ENCODE measurements at regions of chr19 and their contacts with region 1.

Region 1: GRCh38 chr19:18097217-18097992 is at the start of gene MAST3:
- DNase-seq: peak; percentile 93
- ATAC-seq: peak; percentile 76
- H3K4me3 ChIP-seq: peak within 1 kb of the TSS; percentile 71 to 95 (median 91)
- H3K4me3 Mint-ChIP-seq: peak within 1 kb of the TSS; percentile 97
- H3K27ac ChIP-seq: peak within 1 kb of the TSS; percentile 82 to 96
- H3K27ac Mint-ChIP-seq: peak within 1 kb of the TSS; percentile 92
- H3K4me1 ChIP-seq: peaks cover 10 to 42% of the 10 kb centered on the region in 2 donors
- H3K4me1 Mint-ChIP-seq: peaks cover 38% of the 10 kb centered on the region
- H3K27me3 ChIP-seq: no peaks in the 10 kb centered on the region
- H3K27me3 Mint-ChIP-seq: no peaks in the 10 kb centered on the region
- CTCF ChIP-seq: no peak
- total RNA-seq, gene MAST3: 85.5 and 90.7 TPM in 2 replicates

Region 2: DNA sequence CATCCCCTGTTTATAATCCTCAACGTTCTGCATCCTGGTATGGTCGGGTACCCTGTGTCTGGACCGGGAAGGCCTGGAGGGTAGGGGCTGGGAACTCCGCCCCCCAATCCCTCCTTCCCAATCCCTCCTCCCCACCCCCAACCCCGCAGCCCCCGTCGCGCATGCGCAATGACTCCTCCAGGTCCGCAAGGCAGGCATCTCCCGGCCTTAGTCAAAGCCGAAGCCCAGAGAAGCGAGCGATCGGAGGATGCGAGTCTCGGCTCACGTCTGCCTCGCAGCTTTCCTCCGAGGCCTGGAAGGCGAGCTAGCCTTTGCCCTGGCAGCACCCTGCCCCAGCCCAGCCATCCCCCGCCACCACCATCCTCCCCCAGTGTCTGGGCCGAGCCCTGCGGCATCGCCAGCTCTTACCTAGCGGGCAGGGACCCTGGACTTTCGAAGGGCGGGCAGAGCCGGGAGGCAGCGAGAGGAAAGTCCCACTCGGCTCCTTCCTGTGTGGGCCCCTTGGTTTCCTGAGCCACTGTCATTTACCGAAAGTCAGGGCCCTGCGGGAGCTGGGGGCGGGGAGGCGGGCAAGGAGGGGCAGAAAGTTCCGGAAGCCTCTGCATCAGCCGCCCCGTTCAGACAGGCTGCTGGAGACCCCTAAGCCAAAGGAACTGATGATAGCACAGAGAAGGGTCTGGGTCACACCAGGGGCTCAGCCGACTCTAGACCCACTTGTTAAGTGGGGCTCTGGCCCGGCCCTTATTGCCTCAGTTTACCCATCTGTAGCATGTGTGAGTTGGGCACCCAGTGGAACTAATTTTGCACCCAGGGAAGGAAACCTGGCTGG is 249.7 kb before region 1 on chr19 and contains the start of gene JAK3:
- CTCF ChIA-PET with region 1: no interaction called
- POLR2A ChIA-PET with region 1: interaction called, 11 read pairs
- intact Hi-C with region 1: no loop called
- DNase-seq: peak; percentile 88
- ATAC-seq: peak; percentile 81
- H3K4me3 ChIP-seq: peak within 1 kb of the TSS; percentile 57 to 85 (median 67)
- H3K4me3 Mint-ChIP-seq: peak within 1 kb of the TSS; percentile 96
- H3K27ac ChIP-seq: peak within 1 kb of the TSS; percentile 87 to 94
- H3K27ac Mint-ChIP-seq: peak within 1 kb of the TSS; percentile 91
- H3K4me1 ChIP-seq: peaks cover 58 to 90% of the 10 kb centered on the region in 2 donors
- H3K4me1 Mint-ChIP-seq: peaks cover 61% of the 10 kb centered on the region
- H3K27me3 ChIP-seq: no peaks in the 10 kb centered on the region
- H3K27me3 Mint-ChIP-seq: no peaks in the 10 kb centered on the region
- CTCF ChIP-seq: no peak
- total RNA-seq, gene JAK3: 142 and 143 TPM in 2 replicates

Region 3: DNA sequence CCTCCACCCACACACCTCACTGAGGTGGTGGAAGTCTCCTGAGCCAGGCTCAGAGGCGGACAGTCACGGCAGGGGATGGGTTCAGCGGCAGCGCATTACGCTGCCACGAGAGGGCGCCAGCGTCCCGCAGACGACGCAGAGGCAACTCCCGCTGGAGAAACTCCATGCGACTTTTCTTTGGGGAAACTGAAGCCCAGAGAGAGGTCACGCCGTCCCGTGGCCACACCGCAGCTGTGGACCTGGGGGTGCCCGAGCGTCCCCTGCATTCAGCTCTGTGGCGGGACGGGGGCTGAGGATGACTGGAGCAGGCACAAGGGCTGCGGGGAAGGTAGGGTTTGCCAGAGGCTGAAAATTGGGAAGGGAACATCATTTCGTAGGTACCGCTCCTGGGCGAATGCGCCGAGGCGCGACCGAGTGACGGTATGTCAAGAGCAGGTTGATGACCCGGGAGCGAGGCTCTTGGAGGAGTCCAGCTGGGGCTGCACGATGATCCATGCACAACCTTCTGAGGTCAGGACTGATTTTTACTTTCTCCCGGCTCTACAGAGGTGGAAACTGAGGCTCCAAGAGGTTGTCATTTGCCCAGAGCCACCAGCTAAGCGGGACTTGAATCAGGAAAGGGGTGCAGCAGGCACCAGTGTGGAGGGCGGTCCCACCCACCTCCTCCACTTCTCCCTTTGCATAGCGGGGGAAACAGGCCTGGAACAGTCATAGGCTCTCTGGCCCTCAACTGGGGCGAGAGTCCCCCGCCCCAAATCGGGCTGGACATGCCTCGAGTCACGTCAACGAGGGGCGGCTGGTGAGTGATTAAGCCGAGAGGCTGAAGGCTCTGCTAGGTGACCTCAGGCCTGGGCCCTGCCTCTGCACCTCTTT is 90.1 kb before region 1 on chr19:
- CTCF ChIA-PET with region 1: interaction called, 10 read pairs
- POLR2A ChIA-PET with region 1: interaction called, 9 read pairs
- intact Hi-C with region 1: loop called (anchors 1 kb)
- DNase-seq: peak; percentile 91
- ATAC-seq: peak; percentile 59
- H3K4me3 ChIP-seq: peak overlapping the region; percentile 31 to 68 (median 56)
- H3K4me3 Mint-ChIP-seq: peak overlapping the region; percentile 98
- H3K27ac ChIP-seq: peak overlapping the region; percentile 90 to 93
- H3K27ac Mint-ChIP-seq: peak overlapping the region; percentile 94
- H3K4me1 ChIP-seq: peaks cover 30 to 41% of the 10 kb centered on the region in 2 donors
- H3K4me1 Mint-ChIP-seq: peaks cover 42% of the 10 kb centered on the region
- H3K27me3 ChIP-seq: no peaks in the 10 kb centered on the region
- H3K27me3 Mint-ChIP-seq: no peaks in the 10 kb centered on the region
- CTCF ChIP-seq: peak; percentile 100

Region 4: DNA sequence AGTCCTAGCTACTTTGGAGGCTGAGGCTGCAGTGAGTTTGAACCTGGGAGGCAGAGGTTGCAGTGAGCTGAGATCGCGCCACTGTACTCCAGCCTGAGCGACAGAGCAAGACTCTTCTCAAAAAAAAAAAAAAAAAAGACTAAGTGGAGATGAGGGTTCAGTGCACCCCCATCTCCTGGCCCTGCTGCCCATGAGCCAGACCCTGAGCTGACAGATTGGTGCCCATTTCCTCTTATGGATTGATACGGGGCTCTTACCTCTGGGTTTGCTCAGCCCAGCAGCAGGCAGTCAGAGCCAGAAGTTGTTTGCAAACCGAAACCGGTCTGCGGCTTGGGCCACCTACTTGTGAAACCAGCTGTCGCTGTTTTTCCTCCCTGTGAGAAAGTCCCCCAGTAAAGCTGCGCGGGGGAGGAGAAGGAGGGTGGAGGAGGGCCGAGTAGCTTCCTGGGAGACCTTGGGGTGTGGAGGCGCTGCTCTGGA is 52.5 kb before region 1 on chr19:
- CTCF ChIA-PET with region 1: no interaction called
- POLR2A ChIA-PET with region 1: interaction called, 10 read pairs
- intact Hi-C with region 1: loop called (anchors 5 kb)
- DNase-seq: peak; percentile 93
- ATAC-seq: peak; percentile 91
- H3K4me3 ChIP-seq: peak overlapping the region in 4 of 5 experiments; percentile 20 to 52 (median 36)
- H3K4me3 Mint-ChIP-seq: peak overlapping the region; percentile 85
- H3K27ac ChIP-seq: peak overlapping the region; percentile 80 to 91
- H3K27ac Mint-ChIP-seq: peak overlapping the region; percentile 97
- H3K4me1 ChIP-seq: peaks cover 38 to 55% of the 10 kb centered on the region in 2 donors
- H3K4me1 Mint-ChIP-seq: peaks cover 52% of the 10 kb centered on the region
- H3K27me3 ChIP-seq: no peaks in the 10 kb centered on the region
- H3K27me3 Mint-ChIP-seq: no peaks in the 10 kb centered on the region
- CTCF ChIP-seq: no peak

Region 5: GRCh38 chr19:18109733-18110595 is 12.6 kb after region 1 on chr19:
- CTCF ChIA-PET with region 1: interaction called, 58 read pairs
- POLR2A ChIA-PET with region 1: interaction called, 21 read pairs
- intact Hi-C with region 1: loop called (anchors 1 kb)
- DNase-seq: peak; percentile 61
- ATAC-seq: peak; percentile 48
- H3K4me3 ChIP-seq: peak overlapping the region; percentile 22 to 71 (median 64)
- H3K4me3 Mint-ChIP-seq: peak overlapping the region; percentile 79
- H3K27ac ChIP-seq: peak overlapping the region; percentile 49 to 82
- H3K27ac Mint-ChIP-seq: peak overlapping the region; percentile 84
- H3K4me1 ChIP-seq: peaks cover 53 to 65% of the 10 kb centered on the region in 2 donors
- H3K4me1 Mint-ChIP-seq: peaks cover 65% of the 10 kb centered on the region
- H3K27me3 ChIP-seq: no peaks in the 10 kb centered on the region
- H3K27me3 Mint-ChIP-seq: no peaks in the 10 kb centered on the region
- CTCF ChIP-seq: no peak

Region 6: DNA sequence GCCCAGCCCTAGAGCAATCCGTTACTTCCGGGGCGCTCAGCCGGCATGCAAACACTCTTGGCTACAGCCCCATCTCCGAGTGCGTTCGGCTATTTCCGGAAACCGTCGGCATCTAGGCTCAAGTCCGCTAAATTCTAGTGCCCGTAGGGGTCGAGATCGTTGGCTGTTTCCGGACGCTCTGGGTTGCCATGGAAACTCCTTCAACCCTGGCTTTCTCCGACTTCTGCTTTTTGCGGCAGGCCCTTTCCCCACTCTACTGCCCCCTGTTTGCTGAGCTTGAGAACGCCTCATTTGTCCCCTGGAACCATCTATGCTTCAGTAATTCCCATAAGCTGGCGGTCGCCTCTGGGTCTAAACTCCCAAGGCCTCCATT is 55.0 kb after region 1 on chr19:
- CTCF ChIA-PET with region 1: interaction called, 5 read pairs
- POLR2A ChIA-PET with region 1: interaction called, 8 read pairs
- intact Hi-C with region 1: loop called (anchors 1 kb)
- DNase-seq: peak; percentile 100
- ATAC-seq: peak; percentile 71
- H3K4me3 ChIP-seq: peak overlapping the region; percentile 63 to 88 (median 70)
- H3K4me3 Mint-ChIP-seq: peak overlapping the region; percentile 89
- H3K27ac ChIP-seq: peak overlapping the region; percentile 90 to 93
- H3K27ac Mint-ChIP-seq: peak overlapping the region; percentile 95
- H3K4me1 ChIP-seq: peaks cover 14 to 25% of the 10 kb centered on the region in 2 donors
- H3K4me1 Mint-ChIP-seq: peaks cover 23% of the 10 kb centered on the region
- H3K27me3 ChIP-seq: no peaks in the 10 kb centered on the region
- H3K27me3 Mint-ChIP-seq: no peaks in the 10 kb centered on the region
- CTCF ChIP-seq: peak; percentile 88

Region 7: DNA sequence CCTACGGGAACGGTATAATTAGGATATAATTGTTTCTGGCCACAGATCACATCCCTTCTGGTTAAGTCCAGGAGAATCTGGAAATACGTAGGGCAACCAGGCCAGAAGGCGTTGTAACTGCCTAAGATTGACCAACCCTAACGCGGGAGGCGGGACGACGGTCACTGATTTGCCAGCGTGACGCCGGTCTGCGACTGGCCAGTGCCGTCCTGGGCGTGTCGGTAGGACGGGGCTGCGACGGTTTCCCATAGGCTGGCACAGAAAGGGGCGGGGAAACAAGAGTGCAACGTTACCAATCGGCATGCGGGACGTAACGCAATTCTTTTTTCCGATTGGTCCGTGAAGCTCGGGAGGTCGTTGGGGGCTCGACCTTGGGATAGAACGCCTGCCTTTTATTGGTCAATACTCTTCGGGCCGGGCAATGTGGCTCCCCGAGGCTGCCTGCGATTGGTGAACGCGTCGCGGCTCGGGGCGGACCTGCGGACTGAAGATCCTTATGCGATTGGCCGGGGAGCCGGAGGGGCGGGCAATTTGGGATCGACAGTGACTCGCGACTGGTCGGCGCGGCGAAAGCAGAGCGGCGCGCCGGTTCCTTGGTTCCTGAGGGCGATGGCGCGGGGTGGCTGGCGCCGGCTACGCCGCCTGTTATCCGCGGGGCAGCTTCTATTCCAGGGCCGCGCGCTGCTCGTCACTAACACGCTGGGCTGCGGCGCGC is 95.4 kb after region 1 on chr19 and contains the start of gene MPV17L2:
- CTCF ChIA-PET with region 1: interaction called, 3 read pairs
- POLR2A ChIA-PET with region 1: no interaction called
- intact Hi-C with region 1: loop called (anchors 5 kb)
- DNase-seq: peak; percentile 100
- ATAC-seq: peak; percentile 83
- H3K4me3 ChIP-seq: peak within 1 kb of the TSS; percentile 76 to 92 (median 82)
- H3K4me3 Mint-ChIP-seq: peak within 1 kb of the TSS; percentile 93
- H3K27ac ChIP-seq: peak within 1 kb of the TSS; percentile 86 to 93
- H3K27ac Mint-ChIP-seq: peak within 1 kb of the TSS; percentile 97
- H3K4me1 ChIP-seq: peaks cover 25 to 40% of the 10 kb centered on the region in 2 donors
- H3K4me1 Mint-ChIP-seq: peaks cover 38% of the 10 kb centered on the region
- H3K27me3 ChIP-seq: no peaks in the 10 kb centered on the region
- H3K27me3 Mint-ChIP-seq: no peaks in the 10 kb centered on the region
- CTCF ChIP-seq: no peak
- total RNA-seq, gene MPV17L2: 6.5 and 8.6 TPM in 2 replicates

Region 8: GRCh38 chr19:18364826-18365528 is 267.6 kb after region 1 on chr19:
- CTCF ChIA-PET with region 1: no interaction called
- POLR2A ChIA-PET with region 1: no interaction called
- intact Hi-C with region 1: no loop called
- DNase-seq: no peak
- ATAC-seq: no peak
- H3K4me3 ChIP-seq: no peak overlapping the region
- H3K4me3 Mint-ChIP-seq: no peak overlapping the region
- H3K27ac ChIP-seq: no peak overlapping the region
- H3K27ac Mint-ChIP-seq: no peak overlapping the region
- H3K4me1 ChIP-seq: no peaks in the 10 kb centered on the region
- H3K4me1 Mint-ChIP-seq: peaks cover 4% of the 10 kb centered on the region
- H3K27me3 ChIP-seq: no peaks in the 10 kb centered on the region
- H3K27me3 Mint-ChIP-seq: no peaks in the 10 kb centered on the region
- CTCF ChIP-seq: no peak

Measured in B cell (primary cell).